Right cardiac atrium (tissue), 5 donors: ENCODE measurements at regions of chr11 and their contacts with region 1.

Region 1: DNA sequence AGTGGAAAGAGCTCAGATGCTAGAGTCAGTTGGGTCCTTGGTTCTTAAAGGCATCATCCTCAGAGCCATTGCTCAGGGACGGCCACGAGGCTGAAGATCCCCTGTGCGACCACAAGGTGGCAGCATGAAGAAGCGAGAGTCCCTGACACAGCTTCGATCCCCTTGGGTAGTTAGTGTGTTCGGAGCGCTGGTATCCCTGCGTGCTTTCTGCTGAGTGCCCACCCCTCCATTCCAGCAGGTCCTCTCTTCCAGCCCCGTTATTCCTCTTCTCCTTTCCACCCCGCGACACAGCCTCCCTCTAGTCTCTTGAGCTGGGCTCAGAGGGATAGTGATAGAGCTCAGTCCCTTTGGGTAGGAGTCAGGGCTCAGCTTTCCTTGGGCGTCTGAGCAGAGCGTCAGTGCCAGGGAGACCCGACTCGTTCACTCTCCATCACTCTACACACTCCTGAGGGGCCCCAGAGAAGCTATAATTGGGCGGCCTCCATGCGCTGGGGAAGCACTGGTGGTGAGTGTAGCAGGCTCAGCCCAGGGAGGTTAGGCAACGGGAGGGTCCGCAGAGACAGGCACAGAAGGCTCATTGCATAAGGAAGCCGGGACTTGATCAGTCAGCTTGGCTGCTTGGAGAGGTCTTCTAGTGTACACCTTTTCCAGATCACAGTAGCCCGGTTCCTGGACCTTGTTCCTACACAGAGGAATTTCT is at the start of gene OR51D1:
- DNase-seq: peak; percentile 68 to 83 (median 82)
- ATAC-seq: peak; percentile 94
- H3K4me3 ChIP-seq: peak within 1 kb of the TSS; percentile 1
- H3K27ac ChIP-seq: no peak within 1 kb of the TSS
- H3K4me1 ChIP-seq: no peaks in the 10 kb centered on the region
- H3K27me3 ChIP-seq: no peaks in the 10 kb centered on the region
- total RNA-seq, gene OR51D1: not detected

Region 2: DNA sequence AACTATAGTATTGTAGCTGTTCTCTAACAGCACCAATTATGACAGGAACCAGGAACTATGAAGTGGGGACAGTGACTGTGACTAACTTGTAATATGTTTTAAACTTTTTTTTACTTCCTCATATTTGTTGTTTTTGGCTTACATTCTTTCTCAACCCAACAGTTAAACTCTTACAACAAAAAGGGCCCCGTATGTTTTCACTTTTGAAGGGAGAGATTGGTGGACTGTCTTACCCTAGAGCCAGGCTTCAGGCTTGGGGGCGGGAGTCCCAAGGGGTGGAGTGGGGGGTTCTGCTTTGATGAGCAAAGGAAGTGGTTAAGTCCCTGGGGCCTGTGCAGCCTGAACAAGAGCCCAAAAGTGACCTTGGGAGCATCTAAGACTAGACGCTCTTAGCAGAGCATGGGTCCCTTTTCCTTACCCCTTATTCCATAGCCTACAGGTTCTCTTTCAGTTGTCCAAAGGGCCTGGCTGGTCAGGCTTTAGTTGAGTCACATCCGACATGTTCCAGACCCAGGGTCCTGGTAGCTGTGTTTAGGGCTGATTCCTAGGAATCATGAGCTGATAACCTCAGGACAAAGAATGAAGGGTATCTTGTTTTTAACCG is 742.9 kb before region 1 on chr11:
- intact Hi-C with region 1: no loop called
- DNase-seq: peak in 2 of 3 donors; percentile 51 to 75
- ATAC-seq: peak; percentile 65 to 80
- H3K4me3 ChIP-seq: no peak overlapping the region
- H3K27ac ChIP-seq: peak overlapping the region; percentile 39
- H3K4me1 ChIP-seq: peaks cover 7% of the 10 kb centered on the region
- H3K27me3 ChIP-seq: no peaks in the 10 kb centered on the region

Region 3: DNA sequence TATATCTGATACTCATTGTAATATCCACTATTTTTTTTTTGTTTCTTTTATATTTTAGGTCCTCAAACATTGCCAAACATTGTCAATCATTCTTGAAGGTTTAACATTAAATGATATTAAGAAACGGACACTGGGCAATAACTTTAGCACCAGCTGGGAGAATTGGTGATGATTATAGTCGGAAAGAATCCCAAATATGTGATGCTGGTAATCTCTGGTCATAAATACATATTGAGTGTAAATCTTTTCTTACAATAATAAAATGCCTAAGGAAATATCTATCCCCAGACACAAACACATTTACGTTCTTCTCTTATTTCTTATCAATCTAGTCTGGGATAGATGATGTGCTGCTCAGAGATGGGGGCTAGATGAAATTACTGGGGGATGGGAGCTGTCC is 35.4 kb after region 1 on chr11:
- intact Hi-C with region 1: no loop called
- DNase-seq: no peak
- ATAC-seq: no peak
- H3K4me3 ChIP-seq: no peak overlapping the region
- H3K27ac ChIP-seq: no peak overlapping the region
- H3K4me1 ChIP-seq: no peaks in the 10 kb centered on the region
- H3K27me3 ChIP-seq: no peaks in the 10 kb centered on the region

Region 4: GRCh38 chr11:4826425-4826824 is 189.3 kb after region 1 on chr11:
- intact Hi-C with region 1: loop called in 3 of 4 experiments (anchors 2 to 5 kb)
- DNase-seq: no peak
- ATAC-seq: peak in 1 of 2 donors; percentile 19
- H3K4me3 ChIP-seq: no peak overlapping the region
- H3K27ac ChIP-seq: no peak overlapping the region
- H3K4me1 ChIP-seq: no peaks in the 10 kb centered on the region
- H3K27me3 ChIP-seq: no peaks in the 10 kb centered on the region

Region 5: DNA sequence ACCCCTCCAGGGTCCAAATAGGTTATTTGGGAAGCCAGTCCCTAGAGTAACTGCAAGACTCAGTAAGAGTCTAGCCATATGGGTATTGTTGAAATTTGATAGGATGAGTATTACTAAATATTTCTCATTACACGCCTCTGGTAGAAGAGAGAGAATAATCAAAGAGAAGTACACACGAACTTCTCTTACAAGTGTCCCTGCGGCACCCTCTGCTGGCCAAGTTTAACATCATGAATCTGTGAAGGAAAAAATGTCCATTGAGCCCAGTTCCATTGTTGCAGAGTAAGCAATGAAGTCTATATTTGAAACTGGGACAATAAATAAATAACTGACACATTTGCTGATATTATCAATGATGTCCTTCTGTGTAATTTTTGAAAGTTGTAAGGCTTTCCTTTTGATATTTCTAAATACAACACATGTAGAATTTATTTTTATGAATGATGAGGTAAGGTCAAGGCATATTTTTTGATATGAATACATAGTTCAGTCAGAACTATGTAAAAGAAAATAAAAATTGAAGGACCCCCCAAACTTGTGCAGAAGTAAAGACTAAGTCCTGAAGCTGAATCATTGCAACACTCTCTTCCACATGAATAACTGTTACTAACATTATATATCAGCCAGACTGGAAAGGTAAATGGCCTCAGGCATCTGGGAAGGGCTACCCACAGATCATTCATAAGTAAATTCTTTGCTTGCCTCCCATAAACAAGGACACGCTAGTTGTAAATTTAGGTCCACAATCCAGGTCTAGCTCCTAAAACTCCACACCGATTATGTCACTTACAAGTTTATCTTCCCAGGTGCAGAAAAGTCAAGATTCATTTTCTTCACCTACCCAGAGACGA is 367.5 kb after region 1 on chr11:
- intact Hi-C with region 1: loop called in 3 of 4 experiments (anchors 5 kb)
- DNase-seq: peak in 2 of 3 donors; percentile 35 to 74
- ATAC-seq: peak in 1 of 2 donors; percentile 21
- H3K4me3 ChIP-seq: no peak overlapping the region
- H3K27ac ChIP-seq: no peak overlapping the region
- H3K4me1 ChIP-seq: no peaks in the 10 kb centered on the region
- H3K27me3 ChIP-seq: no peaks in the 10 kb centered on the region